Upper lobe of right lung (tissue), 1 donor: ENCODE measurements at regions of chr1 and their contacts with region 1.

Region 1: GRCh38 chr1:37682334-37682987 is 9.9 kb upstream of the CDCA8 start:
- DNase-seq: peak; percentile 70
- ATAC-seq: peak; percentile 93
- H3K4me3 ChIP-seq: no peak overlapping the region
- H3K27ac ChIP-seq: no peak overlapping the region
- H3K4me1 ChIP-seq: no peaks in the 10 kb centered on the region
- H3K27me3 ChIP-seq: no peaks in the 10 kb centered on the region
- CTCF ChIP-seq: peak; percentile 91

Region 2: DNA sequence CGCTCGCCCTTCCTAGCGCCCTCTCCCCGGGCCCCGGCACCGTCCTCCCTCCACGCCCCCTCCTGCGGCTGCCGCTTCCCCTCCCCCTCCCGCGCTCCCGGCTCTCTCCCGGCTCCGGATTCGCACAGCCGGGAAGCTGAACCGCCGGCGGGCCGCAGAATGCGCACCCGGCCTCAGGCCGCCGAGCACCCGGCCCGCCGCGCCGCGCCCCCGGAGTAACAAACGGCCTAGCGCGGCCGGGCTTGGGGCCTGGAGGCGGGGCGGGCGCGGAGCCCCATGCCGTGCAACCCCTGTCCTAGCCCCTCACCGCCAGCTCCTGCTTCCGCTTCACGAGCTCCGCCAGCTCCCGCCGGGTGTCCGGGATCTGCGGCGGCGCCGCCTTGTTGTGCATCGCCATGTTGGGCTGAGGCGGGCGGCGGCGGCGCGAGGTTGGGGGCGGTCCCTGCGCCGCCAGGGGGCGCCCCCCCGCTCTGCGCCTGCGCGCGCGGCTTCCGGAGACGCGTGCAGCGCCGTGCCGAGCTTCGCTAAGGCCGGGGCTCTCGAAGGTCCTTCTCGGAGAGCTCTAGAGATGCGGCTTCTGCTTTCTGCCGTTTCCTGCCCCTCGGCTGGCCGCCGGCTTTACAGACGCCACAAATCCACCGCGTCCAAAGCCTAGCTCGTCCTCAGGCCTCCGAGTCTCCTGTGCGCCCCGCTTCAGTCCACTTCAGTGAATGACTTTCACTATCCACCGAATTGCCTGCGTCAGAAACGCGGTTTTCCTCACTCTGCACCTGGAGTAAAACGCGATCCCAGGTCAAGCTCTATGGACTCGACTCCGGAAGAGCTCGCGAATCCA is 167.9 kb before region 1 on chr1 and contains the start of gene MEAF6:
- intact Hi-C with region 1: no loop called
- DNase-seq: peak; percentile 93
- ATAC-seq: peak; percentile 99
- H3K4me3 ChIP-seq: peak within 1 kb of the TSS; percentile 82
- H3K27ac ChIP-seq: peak within 1 kb of the TSS; percentile 95
- H3K4me1 ChIP-seq: peaks cover 22% of the 10 kb centered on the region
- H3K27me3 ChIP-seq: no peaks in the 10 kb centered on the region
- CTCF ChIP-seq: peak; percentile 67
- total RNA-seq, gene MEAF6: 64.5 TPM

Region 3: DNA sequence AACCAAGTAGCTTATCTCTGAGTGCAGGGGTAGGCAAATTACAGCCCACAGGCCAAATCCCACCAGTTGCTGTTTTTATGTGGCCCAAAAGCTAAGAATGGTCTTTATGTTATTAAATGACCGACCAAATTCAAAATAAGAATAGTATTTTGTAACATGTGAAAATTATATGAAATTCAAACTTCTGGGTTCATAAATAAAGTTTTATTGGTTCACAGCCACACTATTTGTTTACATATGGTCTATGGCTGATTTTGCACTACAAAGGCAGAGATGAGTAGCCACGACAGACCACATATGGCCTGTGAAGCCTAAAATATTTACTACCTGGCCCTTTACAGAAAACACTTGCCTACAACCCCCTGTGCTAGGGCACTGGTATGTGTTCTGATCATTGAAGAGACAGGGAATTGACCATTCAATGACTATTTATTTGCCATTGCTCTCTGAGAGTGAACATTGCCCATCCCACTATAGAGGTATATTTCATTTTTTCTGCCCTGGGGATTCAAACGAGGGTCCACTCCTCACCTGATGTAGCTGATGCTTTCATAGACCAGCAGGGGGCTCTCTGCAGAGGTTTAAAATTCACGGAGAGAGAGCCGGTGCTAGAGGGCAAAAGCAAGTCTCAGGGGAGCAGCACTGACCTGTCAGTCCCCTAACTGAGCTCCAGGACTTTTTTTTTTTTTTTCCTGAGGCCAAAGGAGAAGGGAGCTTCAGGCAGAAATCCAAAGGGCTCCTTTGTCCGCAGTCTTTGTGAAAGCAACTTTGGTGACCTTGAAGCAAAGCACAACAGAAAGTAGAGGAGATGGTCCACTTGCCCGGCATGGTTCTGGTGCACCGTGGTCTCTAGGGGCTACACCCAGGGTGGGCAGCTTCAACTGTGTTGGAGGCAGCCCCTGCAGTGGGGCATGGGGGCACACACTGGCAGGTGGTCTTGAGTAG is 79.4 kb before region 1 on chr1:
- intact Hi-C with region 1: loop called (anchors 10 kb)
- DNase-seq: no peak
- ATAC-seq: peak; percentile 58
- H3K4me3 ChIP-seq: no peak overlapping the region
- H3K27ac ChIP-seq: no peak overlapping the region
- H3K4me1 ChIP-seq: peaks cover 13% of the 10 kb centered on the region
- H3K27me3 ChIP-seq: no peaks in the 10 kb centered on the region
- CTCF ChIP-seq: peak; percentile 68

Region 4: GRCh38 chr1:37752583-37753471 is 70.4 kb after region 1 on chr1:
- intact Hi-C with region 1: no loop called
- DNase-seq: peak; percentile 74
- ATAC-seq: peak; percentile 79
- H3K4me3 ChIP-seq: peak overlapping the region; percentile 30
- H3K27ac ChIP-seq: no peak overlapping the region
- H3K4me1 ChIP-seq: peaks cover 5% of the 10 kb centered on the region
- H3K27me3 ChIP-seq: peaks cover 68% of the 10 kb centered on the region
- CTCF ChIP-seq: no peak